ENCODE measurements at regions of chr2 and their contacts with region 1.

Region 1: GRCh38 chr2:112645310-112646101 is at the start of gene SLC20A1:
- DNase-seq: peak; percentile 96
- ATAC-seq: peak; percentile 68
- H3K4me3 ChIP-seq: peak within 1 kb of the TSS; percentile 78
- H3K27ac ChIP-seq: peak within 1 kb of the TSS; percentile 92
- H3K4me1 ChIP-seq: peaks cover 68% of the 10 kb centered on the region
- H3K27me3 ChIP-seq: no peaks in the 10 kb centered on the region
- CTCF ChIP-seq: 0 out of 2 replicates have a peak, but pooled peaks have one; percentile 32
- total RNA-seq, gene SLC20A1: 209 and 257 TPM in 2 replicates

Region 2: GRCh38 chr2:110732422-110733413 is 1912.8 kb before region 1 on chr2 and contains the start of gene ACOXL:
- CTCF ChIA-PET with region 1: no interaction called
- POLR2A ChIA-PET with region 1: interaction called, 14 read pairs
- intact Hi-C with region 1: no loop called
- DNase-seq: peak; percentile 81
- ATAC-seq: peak; percentile 72
- H3K4me3 ChIP-seq: peak within 1 kb of the TSS; percentile 80
- H3K27ac ChIP-seq: peak within 1 kb of the TSS; percentile 35
- H3K4me1 ChIP-seq: peaks cover 32% of the 10 kb centered on the region
- H3K27me3 ChIP-seq: no peaks in the 10 kb centered on the region
- CTCF ChIP-seq: no peak
- total RNA-seq, gene ACOXL: 15.5 and 16.3 TPM in 2 replicates

Region 3: GRCh38 chr2:112519506-112519905 is 126.0 kb before region 1 on chr2:
- CTCF ChIA-PET with region 1: no interaction called
- POLR2A ChIA-PET with region 1: no interaction called
- intact Hi-C with region 1: no loop called
- DNase-seq: no peak
- ATAC-seq: no peak
- H3K4me3 ChIP-seq: no peak overlapping the region
- H3K27ac ChIP-seq: no peak overlapping the region
- H3K4me1 ChIP-seq: no peaks in the 10 kb centered on the region
- H3K27me3 ChIP-seq: no peaks in the 10 kb centered on the region
- CTCF ChIP-seq: no peak

Region 4: GRCh38 chr2:112615011-112615410 is 30.5 kb before region 1 on chr2:
- CTCF ChIA-PET with region 1: no interaction called
- POLR2A ChIA-PET with region 1: no interaction called
- intact Hi-C with region 1: no loop called
- DNase-seq: no peak
- ATAC-seq: no peak
- H3K4me3 ChIP-seq: no peak overlapping the region
- H3K27ac ChIP-seq: no peak overlapping the region
- H3K4me1 ChIP-seq: no peaks in the 10 kb centered on the region
- H3K27me3 ChIP-seq: no peaks in the 10 kb centered on the region
- CTCF ChIP-seq: no peak

Region 5: DNA sequence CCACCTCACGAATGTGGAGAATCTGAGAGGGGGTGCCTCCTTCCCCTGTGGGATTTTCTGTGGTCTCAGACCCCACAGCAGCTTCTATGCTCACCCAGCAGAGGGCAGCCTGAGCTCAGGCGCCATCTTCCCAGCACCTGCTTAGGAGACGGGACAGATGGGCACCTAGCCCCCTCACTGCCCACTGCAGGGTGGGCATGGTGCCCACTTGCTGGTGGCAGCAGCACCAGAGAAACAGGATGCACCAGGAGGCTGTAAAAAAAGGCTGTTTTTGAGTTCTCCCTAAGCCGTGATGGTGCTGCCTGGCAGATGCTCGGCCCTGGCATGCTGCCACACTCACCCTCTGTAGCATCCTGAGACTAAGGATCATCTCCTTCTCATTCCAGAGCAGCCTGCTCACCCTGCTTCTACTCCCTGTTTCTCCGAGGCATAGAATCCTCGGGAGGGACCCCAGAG is 18.9 kb before region 1 on chr2:
- CTCF ChIA-PET with region 1: interaction called, 9 read pairs
- POLR2A ChIA-PET with region 1: interaction called, 10 read pairs
- intact Hi-C with region 1: loop called (anchors 1 kb)
- DNase-seq: peak; percentile 72
- ATAC-seq: peak; percentile 37
- H3K4me3 ChIP-seq: peak overlapping the region; percentile 47; the same call in 1 of the 2 replicates
- H3K27ac ChIP-seq: peak overlapping the region; percentile 94
- H3K4me1 ChIP-seq: peaks cover 93% of the 10 kb centered on the region
- H3K27me3 ChIP-seq: no peaks in the 10 kb centered on the region
- CTCF ChIP-seq: peak; percentile 95

Region 6: GRCh38 chr2:112692496-112692911 is 47.0 kb after region 1 on chr2:
- CTCF ChIA-PET with region 1: interaction called, 3 read pairs
- POLR2A ChIA-PET with region 1: interaction called, 5 read pairs
- intact Hi-C with region 1: loop called (anchors 2 kb)
- DNase-seq: peak; percentile 96
- ATAC-seq: peak; percentile 80
- H3K4me3 ChIP-seq: no peak overlapping the region
- H3K27ac ChIP-seq: peak overlapping the region; percentile 66
- H3K4me1 ChIP-seq: peaks cover 49% of the 10 kb centered on the region
- H3K27me3 ChIP-seq: no peaks in the 10 kb centered on the region
- CTCF ChIP-seq: no peak

Region 7: GRCh38 chr2:112718916-112719315 is 73.4 kb after region 1 on chr2:
- CTCF ChIA-PET with region 1: no interaction called
- POLR2A ChIA-PET with region 1: no interaction called
- intact Hi-C with region 1: no loop called
- DNase-seq: no peak
- ATAC-seq: no peak
- H3K4me3 ChIP-seq: no peak overlapping the region
- H3K27ac ChIP-seq: no peak overlapping the region
- H3K4me1 ChIP-seq: peaks cover 7% of the 10 kb centered on the region; the same call in 1 of the 2 replicates
- H3K27me3 ChIP-seq: no peaks in the 10 kb centered on the region
- CTCF ChIP-seq: no peak

Region 8: GRCh38 chr2:112811841-112812306 is 166.4 kb after region 1 on chr2:
- CTCF ChIA-PET with region 1: no interaction called
- POLR2A ChIA-PET with region 1: no interaction called
- intact Hi-C with region 1: no loop called
- DNase-seq: peak; percentile 78
- ATAC-seq: peak; percentile 94
- H3K4me3 ChIP-seq: no peak overlapping the region
- H3K27ac ChIP-seq: peak overlapping the region; percentile 85
- H3K4me1 ChIP-seq: peaks cover 19% of the 10 kb centered on the region
- H3K27me3 ChIP-seq: no peaks in the 10 kb centered on the region
- CTCF ChIP-seq: no peak

Region 9: DNA sequence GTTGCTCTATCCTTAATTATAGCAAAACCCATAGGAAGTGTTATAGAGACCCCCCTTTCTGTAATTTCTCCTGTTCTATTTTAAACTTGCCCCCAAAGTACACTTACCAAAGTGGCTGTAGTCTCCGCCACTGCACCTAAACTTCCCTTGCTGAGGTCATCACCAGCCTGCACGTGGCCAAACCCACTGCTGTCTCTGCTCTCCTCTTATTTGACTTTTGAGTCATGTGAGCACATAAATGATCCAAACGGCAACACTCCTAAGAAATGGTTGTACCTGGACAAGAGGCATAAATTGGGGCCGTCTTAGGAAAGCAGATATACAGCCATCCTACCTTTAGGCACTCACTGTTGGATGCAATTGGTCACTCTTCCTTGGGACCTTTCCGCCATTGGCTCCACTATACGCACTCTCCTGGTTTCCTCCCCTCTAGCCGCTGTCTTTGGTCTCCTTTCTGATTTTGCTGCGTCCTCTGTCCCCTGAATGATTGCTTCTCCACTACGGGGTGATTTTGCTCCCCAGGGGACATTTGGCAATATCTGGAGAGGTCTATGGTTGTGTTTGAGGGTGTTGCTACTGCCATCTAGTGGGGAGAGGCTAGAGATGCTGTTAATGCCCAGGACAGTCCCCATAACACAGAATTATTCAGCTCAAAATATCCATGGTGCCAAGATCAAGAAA is 313.1 kb after region 1 on chr2:
- CTCF ChIA-PET with region 1: no interaction called
- POLR2A ChIA-PET with region 1: interaction called, 30 read pairs
- intact Hi-C with region 1: no loop called
- DNase-seq: peak; percentile 69
- ATAC-seq: peak; percentile 94
- H3K4me3 ChIP-seq: peak overlapping the region; percentile 33; the same call in 1 of the 2 replicates
- H3K27ac ChIP-seq: peak overlapping the region; percentile 59
- H3K4me1 ChIP-seq: peaks cover 12% of the 10 kb centered on the region
- H3K27me3 ChIP-seq: no peaks in the 10 kb centered on the region
- CTCF ChIP-seq: peak; percentile 87

Measured in PC-3 (cell line).